ENCODE measurements at regions of chr1 and their contacts with region 1.

Region 1: DNA sequence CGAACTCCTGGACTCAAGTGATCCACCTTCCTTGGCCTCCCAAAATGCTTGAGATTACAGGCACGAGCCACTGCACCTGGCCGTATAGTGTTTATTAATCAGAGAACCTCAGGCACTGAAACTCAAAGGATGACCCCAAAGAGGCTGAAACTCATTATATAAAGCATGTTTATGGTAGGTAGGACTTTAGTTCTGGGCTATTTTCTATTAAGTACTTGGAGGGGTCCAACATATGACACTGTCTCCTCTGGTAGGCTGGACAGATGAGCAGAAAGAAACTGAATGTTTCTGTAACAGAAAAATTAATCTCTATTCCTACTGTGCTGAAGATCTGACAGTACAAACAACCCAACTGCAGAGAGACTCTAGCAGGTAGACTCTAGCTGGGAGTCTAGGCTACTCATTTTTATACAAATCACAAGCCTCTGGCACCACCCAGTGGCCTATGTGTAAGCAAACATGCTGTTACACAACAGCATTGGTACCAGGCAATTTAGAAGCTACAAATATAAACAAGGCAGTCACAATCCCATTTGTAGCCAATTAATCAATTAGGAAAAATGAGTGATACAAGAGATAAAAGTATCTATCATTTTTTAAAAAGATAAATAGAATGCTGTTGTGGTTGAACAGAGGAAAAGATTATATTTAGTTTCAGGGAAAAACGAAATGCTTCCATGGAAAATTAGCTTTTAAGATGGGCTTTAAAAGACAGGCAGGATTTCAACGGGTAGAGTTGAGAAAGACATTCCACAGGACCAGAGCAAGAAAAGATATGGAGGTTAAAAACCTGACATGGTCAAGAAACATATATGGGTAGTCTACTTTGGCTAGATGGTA is 10.4 kb downstream of the DCAF8 start:
- DNase-seq: peak; percentile 72
- ATAC-seq: peak; percentile 89
- H3K4me3 Mint-ChIP-seq: no peak overlapping the region
- H3K27ac Mint-ChIP-seq: no peak overlapping the region
- H3K4me1 Mint-ChIP-seq: peaks cover 2% of the 10 kb centered on the region
- H3K27me3 Mint-ChIP-seq: no peaks in the 10 kb centered on the region

Region 2: DNA sequence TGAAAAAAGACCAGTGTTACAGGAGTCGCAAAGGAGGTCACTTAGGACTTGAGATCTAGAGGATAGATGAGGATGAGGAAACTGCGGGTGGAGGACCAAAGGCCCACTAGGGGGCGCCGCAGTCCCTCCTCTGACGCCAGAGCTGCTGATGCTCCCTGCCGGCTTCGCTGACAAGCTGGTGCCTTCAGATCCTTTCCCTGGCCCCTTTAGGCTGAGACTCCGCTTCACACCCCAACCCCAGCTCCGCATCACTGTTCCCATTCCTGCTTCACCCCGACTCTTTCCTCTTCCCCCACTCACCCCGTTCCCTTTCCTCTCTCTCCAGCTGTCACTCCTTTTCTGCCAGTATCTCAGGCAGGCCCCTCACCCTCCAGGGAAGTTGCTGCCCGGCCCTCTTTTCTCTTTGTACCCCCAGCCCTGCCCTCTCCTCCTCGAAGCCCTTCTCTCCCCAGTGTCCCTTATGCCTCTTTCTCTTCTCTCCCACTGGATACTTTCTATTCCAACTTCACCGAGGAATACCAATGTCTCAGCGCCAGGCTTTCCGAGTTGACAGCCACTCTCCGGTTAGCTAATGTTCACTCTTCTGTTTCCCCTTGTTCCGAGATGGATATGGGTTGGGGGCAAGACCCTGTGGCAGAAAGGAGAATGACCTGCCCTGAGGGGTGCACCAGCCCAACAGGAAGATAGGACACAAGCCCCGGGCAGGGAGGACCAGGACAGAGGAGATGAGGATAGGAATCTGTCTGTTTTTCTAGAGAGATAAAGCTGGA is 166.0 kb before region 1 on chr1:
- CTCF ChIA-PET with region 1: interaction called, 32 read pairs
- POLR2A ChIA-PET with region 1: no interaction called
- DNase-seq: peak; percentile 87
- ATAC-seq: peak; percentile 76
- H3K4me3 Mint-ChIP-seq: no peak overlapping the region
- H3K27ac Mint-ChIP-seq: no peak overlapping the region
- H3K4me1 Mint-ChIP-seq: peaks cover 12% of the 10 kb centered on the region
- H3K27me3 Mint-ChIP-seq: peaks cover 20% of the 10 kb centered on the region

Region 3: DNA sequence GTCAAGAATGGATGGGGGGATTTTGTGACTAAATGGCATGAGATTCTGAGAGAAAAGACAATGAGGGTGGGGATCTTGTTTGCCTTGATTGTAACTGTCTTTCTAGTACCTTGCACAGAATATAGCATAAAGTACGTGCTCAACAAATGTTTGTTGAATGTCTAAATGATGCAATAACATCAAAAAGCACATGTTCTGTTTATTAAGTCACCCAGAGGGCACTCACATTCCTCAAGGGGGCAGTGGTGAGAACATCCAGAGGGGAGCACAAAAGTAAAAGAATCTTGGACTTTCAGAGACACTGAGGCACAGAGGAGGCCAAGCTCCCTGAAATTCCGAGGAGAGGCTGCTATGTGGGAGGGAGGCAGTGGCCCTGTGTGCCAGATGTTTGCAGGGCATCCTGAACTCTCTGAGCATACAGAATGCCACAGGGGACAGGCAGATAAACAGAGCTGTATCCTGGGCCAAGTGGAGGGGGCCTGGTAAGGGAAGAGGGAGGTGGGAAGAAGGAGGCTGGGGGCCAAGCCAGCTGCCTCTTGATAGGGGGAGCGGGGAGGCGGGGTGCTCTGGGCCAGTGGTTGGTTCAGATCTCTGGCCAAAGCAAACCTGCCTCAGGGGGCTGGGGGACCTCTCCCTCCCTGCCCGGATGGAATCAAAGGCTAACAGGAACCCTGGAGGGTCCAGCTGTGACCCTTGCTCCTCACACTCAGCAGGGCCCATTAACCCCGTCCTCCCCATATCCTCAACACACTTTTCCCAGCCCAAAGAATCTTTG is 142.8 kb before region 1 on chr1:
- CTCF ChIA-PET with region 1: interaction called, 91 read pairs
- POLR2A ChIA-PET with region 1: no interaction called
- DNase-seq: peak; percentile 60
- ATAC-seq: no peak
- H3K4me3 Mint-ChIP-seq: no peak overlapping the region
- H3K27ac Mint-ChIP-seq: no peak overlapping the region
- H3K4me1 Mint-ChIP-seq: no peaks in the 10 kb centered on the region
- H3K27me3 Mint-ChIP-seq: peaks cover 5% of the 10 kb centered on the region

Region 4: DNA sequence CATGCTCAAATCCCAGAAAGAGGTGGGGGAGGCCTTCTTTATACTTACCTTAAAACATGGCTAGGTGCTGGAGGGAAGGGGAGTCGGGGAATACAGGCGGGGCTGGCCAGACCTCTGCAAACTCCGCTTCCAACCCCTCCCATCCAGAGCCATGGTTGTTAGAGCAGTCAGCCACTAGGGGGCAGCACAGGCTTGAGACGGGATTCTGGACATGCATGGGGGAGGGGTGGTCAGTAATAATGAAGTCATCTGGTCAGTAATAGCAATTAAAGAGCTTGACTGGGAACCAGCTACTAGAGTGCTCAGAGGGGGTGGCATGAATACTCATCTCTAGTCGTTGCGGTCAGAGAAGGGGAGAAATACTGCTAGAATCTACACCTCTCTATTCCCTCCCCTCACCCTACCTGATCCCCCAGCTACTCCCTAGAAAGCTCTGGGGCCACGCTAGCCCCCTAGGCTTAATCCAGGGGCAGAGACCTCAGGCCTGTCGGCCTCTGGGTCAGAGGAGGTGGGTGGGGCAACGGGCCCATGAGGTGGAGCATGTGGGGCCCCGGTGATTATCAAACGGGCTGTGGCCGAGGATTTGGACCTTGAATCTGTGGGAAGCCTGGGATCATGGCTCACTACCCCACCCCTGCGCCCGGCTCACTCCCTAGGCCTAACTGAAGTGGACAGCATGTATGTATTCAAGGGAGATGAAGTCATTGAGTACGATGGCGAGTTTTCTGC is 58.7 kb before region 1 on chr1:
- CTCF ChIA-PET with region 1: interaction called, 35 read pairs
- POLR2A ChIA-PET with region 1: no interaction called
- DNase-seq: peak; percentile 86
- ATAC-seq: peak; percentile 69
- H3K4me3 Mint-ChIP-seq: no peak overlapping the region
- H3K27ac Mint-ChIP-seq: no peak overlapping the region
- H3K4me1 Mint-ChIP-seq: no peaks in the 10 kb centered on the region
- H3K27me3 Mint-ChIP-seq: peaks cover 4% of the 10 kb centered on the region

Region 5: GRCh38 chr1:160219062-160219929 is 32.6 kb before region 1 on chr1:
- CTCF ChIA-PET with region 1: interaction called, 14 read pairs
- POLR2A ChIA-PET with region 1: interaction called, 4 read pairs
- DNase-seq: no peak
- ATAC-seq: no peak
- H3K4me3 Mint-ChIP-seq: no peak overlapping the region
- H3K27ac Mint-ChIP-seq: no peak overlapping the region
- H3K4me1 Mint-ChIP-seq: no peaks in the 10 kb centered on the region
- H3K27me3 Mint-ChIP-seq: no peaks in the 10 kb centered on the region

Region 6: GRCh38 chr1:160232911-160233310 is 19.0 kb before region 1 on chr1:
- CTCF ChIA-PET with region 1: interaction called, 72 read pairs
- POLR2A ChIA-PET with region 1: no interaction called
- DNase-seq: no peak
- ATAC-seq: peak; percentile 36
- H3K4me3 Mint-ChIP-seq: no peak overlapping the region
- H3K27ac Mint-ChIP-seq: no peak overlapping the region
- H3K4me1 Mint-ChIP-seq: no peaks in the 10 kb centered on the region
- H3K27me3 Mint-ChIP-seq: no peaks in the 10 kb centered on the region

Region 7: DNA sequence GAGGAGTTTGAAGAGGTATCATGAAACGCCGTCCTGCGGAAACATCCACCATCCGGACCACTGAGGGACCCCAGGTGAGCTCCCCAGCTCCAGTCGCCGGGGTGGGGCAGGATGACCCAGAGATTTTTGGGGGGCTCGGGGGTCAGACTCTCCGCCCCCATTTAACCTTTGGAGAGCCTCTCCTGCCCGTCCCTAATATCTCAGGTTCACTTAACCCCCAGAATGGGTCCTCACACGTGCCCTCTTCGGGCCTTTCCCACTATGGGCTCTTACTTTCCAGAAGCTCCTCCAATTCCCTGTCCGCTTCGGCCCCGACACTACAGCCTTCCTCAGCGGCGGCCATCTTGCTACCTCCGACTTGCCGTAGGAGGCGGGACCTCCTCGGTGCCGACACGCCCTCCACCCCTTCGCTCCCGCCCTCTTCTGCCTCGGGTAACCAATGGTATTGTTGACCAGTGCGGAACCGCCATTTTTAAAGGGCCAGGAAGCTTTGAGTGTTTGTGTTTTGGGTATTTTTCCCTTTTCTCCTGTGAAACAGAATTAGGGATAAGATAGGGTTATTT is 33.0 kb after region 1 on chr1 and contains the start of gene PEX19:
- CTCF ChIA-PET with region 1: interaction called, 46 read pairs
- POLR2A ChIA-PET with region 1: interaction called, 5 read pairs
- DNase-seq: peak; percentile 96
- ATAC-seq: peak; percentile 100
- H3K4me3 Mint-ChIP-seq: peak within 1 kb of the TSS; percentile 96
- H3K27ac Mint-ChIP-seq: peak within 1 kb of the TSS; percentile 92
- H3K4me1 Mint-ChIP-seq: peaks cover 20% of the 10 kb centered on the region
- H3K27me3 Mint-ChIP-seq: no peaks in the 10 kb centered on the region
- total RNA-seq, gene PEX19: 42.3 to 42.7 TPM

Region 8: DNA sequence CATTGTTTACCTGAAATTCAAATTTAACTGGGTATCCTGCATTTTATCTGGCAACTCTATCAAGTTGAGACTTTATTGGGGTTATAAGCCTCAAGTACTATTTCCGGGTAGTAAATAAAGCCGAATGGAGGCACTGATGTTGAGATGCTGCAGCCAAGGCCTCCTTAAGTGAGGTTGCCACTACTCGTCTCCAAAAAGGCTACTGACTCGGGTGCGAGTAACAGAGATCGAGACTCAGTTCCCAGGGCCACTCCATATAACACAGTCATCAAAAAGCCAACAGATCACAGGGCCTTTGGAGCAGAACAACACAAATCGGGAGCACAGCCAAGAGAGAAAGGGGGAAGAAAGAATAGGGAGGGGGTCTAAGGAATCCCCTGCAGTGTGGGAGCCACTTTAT is 90.6 kb after region 1 on chr1:
- CTCF ChIA-PET with region 1: no interaction called
- POLR2A ChIA-PET with region 1: no interaction called
- DNase-seq: peak; percentile 32
- ATAC-seq: peak; percentile 16
- H3K4me3 Mint-ChIP-seq: peak overlapping the region; percentile 100
- H3K27ac Mint-ChIP-seq: peak overlapping the region; percentile 100
- H3K4me1 Mint-ChIP-seq: peaks cover 57% of the 10 kb centered on the region
- H3K27me3 Mint-ChIP-seq: no peaks in the 10 kb centered on the region

Measured in activated CD8-positive, alpha-beta T cell treated with anti-CD3 and anti-CD28 coated beads, Interleukin-2, amount 10 ng/mL, durations not matched to agents 7 days and 5 days (primary cell).